Naive thymus-derived CD4-positive, alpha-beta T cell (primary cell): ENCODE measurements at regions of chr5 and their contacts with region 1.

Region 1: DNA sequence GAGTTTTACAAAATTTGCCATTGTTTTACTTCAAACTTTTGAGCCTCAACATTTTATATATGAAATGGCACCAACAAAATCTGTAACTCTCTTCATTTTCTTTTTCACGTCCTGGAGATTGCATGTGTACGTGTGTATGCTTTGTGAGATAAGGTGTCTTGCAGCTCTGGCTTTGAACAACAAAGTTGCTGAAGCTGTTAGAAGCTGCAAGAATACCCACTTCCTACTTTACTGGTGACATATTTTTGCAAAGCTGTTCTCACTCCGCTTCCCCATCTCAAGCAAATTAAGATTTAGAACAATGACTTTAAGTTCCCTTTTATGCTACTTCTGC is 41.8 kb downstream of the FYB1 start:
- DNase-seq: peak in 7 of 9 donors; percentile 61 to 86 (median 79)
- ATAC-seq: peak; percentile 79
- H3K4me3 ChIP-seq: peak overlapping the region; percentile 46
- H3K4me3 Mint-ChIP-seq: peak overlapping the region; percentile 58 to 86 (median 80)
- H3K27ac ChIP-seq: peak overlapping the region; percentile 72
- H3K27ac Mint-ChIP-seq: peak overlapping the region; percentile 87 to 98 (median 96)
- H3K4me1 ChIP-seq: peaks cover 94 to 95% of the 10 kb centered on the region in 2 donors
- H3K4me1 Mint-ChIP-seq: peaks cover 84 to 100% (median 96%) of the 10 kb centered on the region in 7 donors
- H3K27me3 ChIP-seq: no peaks in the 10 kb centered on the region
- H3K27me3 Mint-ChIP-seq: no peaks in the 10 kb centered on the region

Region 2: GRCh38 chr5:39074016-39074886 is 103.3 kb before region 1 on chr5 and contains the start of gene RICTOR:
- CTCF ChIA-PET with region 1: no interaction called
- POLR2A ChIA-PET with region 1: interaction called, 4 read pairs
- intact Hi-C with region 1: loop called in 1 of 2 experiments (anchors 5 kb)
- DNase-seq: peak; percentile 83 to 95 (median 88)
- ATAC-seq: peak; percentile 86
- H3K4me3 ChIP-seq: peak within 1 kb of the TSS; percentile 70
- H3K4me3 Mint-ChIP-seq: peak within 1 kb of the TSS; percentile 89 to 99 (median 98)
- H3K27ac ChIP-seq: peak within 1 kb of the TSS; percentile 100
- H3K27ac Mint-ChIP-seq: peak within 1 kb of the TSS; percentile 95 to 99 (median 98)
- H3K4me1 ChIP-seq: peaks cover 12 to 17% of the 10 kb centered on the region in 2 donors
- H3K4me1 Mint-ChIP-seq: peaks cover 23 to 63% (median 51%) of the 10 kb centered on the region in 7 donors
- H3K27me3 ChIP-seq: peaks cover 11 to 12% of the 10 kb centered on the region in 2 donors
- H3K27me3 Mint-ChIP-seq: peaks cover 4 to 29% (median 16%) of the 10 kb centered on the region in 5 donors
- total RNA-seq, gene RICTOR: 56.9 to 96.2 (median 86.5) TPM

Region 3: GRCh38 chr5:39158127-39158593 is 19.4 kb before region 1 on chr5:
- CTCF ChIA-PET with region 1: interaction called, 3 read pairs
- POLR2A ChIA-PET with region 1: interaction called, 22 read pairs
- intact Hi-C with region 1: loop called in 1 of 2 experiments (anchors 2 kb)
- DNase-seq: no peak
- ATAC-seq: no peak
- H3K4me3 ChIP-seq: no peak overlapping the region
- H3K4me3 Mint-ChIP-seq: peak overlapping the region in 9 of 10 donors; percentile 34 to 81 (median 61)
- H3K27ac ChIP-seq: peak overlapping the region; percentile 57
- H3K27ac Mint-ChIP-seq: peak overlapping the region in 8 of 9 donors; percentile 41 to 94 (median 78)
- H3K4me1 ChIP-seq: peaks cover 48 to 81% of the 10 kb centered on the region in 2 donors
- H3K4me1 Mint-ChIP-seq: peaks cover 52 to 97% (median 88%) of the 10 kb centered on the region in 7 donors
- H3K27me3 ChIP-seq: no peaks in the 10 kb centered on the region
- H3K27me3 Mint-ChIP-seq: no peaks in the 10 kb centered on the region

Region 4: GRCh38 chr5:39187831-39188731 is 10.5 kb after region 1 on chr5:
- CTCF ChIA-PET with region 1: interaction called, 24 read pairs
- POLR2A ChIA-PET with region 1: interaction called, 679 read pairs
- intact Hi-C with region 1: loop called (anchors 1 kb)
- DNase-seq: peak in 2 of 9 donors; percentile 46 to 50
- ATAC-seq: peak; percentile 45
- H3K4me3 ChIP-seq: peak overlapping the region; percentile 36
- H3K4me3 Mint-ChIP-seq: peak overlapping the region; percentile 78 to 98 (median 88)
- H3K27ac ChIP-seq: peak overlapping the region; percentile 73
- H3K27ac Mint-ChIP-seq: peak overlapping the region; percentile 92 to 99 (median 98)
- H3K4me1 ChIP-seq: peaks cover 75 to 85% of the 10 kb centered on the region in 2 donors
- H3K4me1 Mint-ChIP-seq: peaks cover 58 to 97% (median 91%) of the 10 kb centered on the region in 7 donors
- H3K27me3 ChIP-seq: no peaks in the 10 kb centered on the region
- H3K27me3 Mint-ChIP-seq: no peaks in the 10 kb centered on the region

Region 5: DNA sequence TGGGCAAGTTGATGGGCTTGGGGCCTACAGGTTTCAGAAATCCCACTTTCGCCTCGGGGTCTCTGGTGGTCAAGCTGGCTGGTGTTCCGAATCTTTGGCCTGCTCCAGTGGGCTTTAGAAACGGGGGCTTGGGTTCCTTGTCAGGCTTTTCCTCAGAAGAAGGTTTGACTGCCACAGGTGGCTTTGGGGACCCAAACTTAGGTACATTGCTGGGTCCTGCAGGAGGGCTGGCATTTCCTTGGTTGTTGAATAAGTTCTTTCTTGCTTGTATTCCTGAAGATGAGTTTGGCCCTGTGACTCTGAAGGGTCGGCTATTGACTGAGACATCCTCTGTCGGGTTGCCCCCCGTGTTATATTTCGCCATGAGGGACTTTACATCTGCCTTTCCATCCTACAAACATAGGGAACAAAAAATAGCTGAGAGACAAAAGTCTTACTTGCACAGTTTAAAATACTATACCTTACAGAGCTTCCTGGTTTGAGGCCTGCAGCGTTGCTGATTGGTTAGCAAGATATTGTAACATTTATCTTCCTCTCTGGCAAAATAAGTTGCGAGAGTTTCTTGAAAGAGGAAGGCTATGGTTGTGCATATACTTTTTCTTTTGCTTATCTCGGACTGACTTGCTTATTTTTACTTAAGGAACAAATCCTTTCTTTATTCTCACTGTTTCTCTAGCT is 25.1 kb after region 1 on chr5:
- CTCF ChIA-PET with region 1: interaction called, 51 read pairs
- POLR2A ChIA-PET with region 1: interaction called, 679 read pairs
- intact Hi-C with region 1: loop called (anchors 1 kb)
- DNase-seq: peak in 7 of 9 donors; percentile 57 to 72 (median 66)
- ATAC-seq: peak; percentile 82
- H3K4me3 ChIP-seq: peak overlapping the region; percentile 82
- H3K4me3 Mint-ChIP-seq: peak overlapping the region; percentile 75 to 100 (median 96)
- H3K27ac ChIP-seq: peak overlapping the region; percentile 93
- H3K27ac Mint-ChIP-seq: peak overlapping the region; percentile 86 to 99 (median 98)
- H3K4me1 ChIP-seq: peaks cover 43 to 48% of the 10 kb centered on the region in 2 donors
- H3K4me1 Mint-ChIP-seq: peaks cover 28 to 45% (median 44%) of the 10 kb centered on the region in 7 donors
- H3K27me3 ChIP-seq: no peaks in the 10 kb centered on the region
- H3K27me3 Mint-ChIP-seq: no peaks in the 10 kb centered on the region

Region 6: DNA sequence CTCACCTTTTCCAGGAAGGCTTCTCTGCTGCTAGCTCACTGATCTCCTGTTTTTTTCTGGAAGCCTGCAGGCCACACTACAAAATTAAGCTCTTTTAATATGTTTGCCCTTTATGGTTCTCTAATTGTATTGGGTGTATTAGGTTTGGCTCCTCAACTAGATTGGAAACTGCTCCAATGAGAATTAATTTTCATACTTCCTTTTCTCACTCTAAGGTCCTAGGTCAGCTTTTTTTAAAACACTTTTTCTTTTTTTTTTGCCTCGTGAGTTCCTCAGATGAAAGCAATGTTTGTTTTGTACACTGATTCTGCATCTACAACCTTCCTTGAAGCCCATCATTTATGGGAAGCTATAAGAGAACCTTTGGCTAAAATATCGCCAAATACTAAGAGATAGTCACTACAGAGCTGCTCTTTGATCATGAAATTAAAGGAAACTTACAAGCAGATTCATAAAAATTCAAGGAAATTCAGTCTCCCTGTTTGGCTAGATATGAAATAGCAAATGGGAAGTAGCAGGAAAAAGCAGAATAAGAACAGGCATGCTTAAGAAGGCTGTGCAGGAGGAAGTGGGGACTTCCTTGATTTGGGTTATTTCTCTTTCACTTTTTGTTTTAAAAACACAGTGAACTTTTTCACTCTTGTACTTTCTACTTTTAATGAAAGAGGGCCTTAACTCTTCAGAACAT is 96.9 kb after region 1 on chr5:
- CTCF ChIA-PET with region 1: interaction called, 6 read pairs
- POLR2A ChIA-PET with region 1: interaction called, 8 read pairs
- intact Hi-C with region 1: loop called in 1 of 2 experiments (anchors 2 kb)
- DNase-seq: peak in 7 of 9 donors; percentile 29 to 52 (median 46)
- ATAC-seq: peak; percentile 68
- H3K4me3 ChIP-seq: peak overlapping the region; percentile 59
- H3K4me3 Mint-ChIP-seq: peak overlapping the region; percentile 63 to 88 (median 85)
- H3K27ac ChIP-seq: peak overlapping the region; percentile 74
- H3K27ac Mint-ChIP-seq: peak overlapping the region; percentile 92 to 98 (median 96)
- H3K4me1 ChIP-seq: peaks cover 34 to 49% of the 10 kb centered on the region in 2 donors
- H3K4me1 Mint-ChIP-seq: peaks cover 25 to 67% (median 47%) of the 10 kb centered on the region in 7 donors
- H3K27me3 ChIP-seq: no peaks in the 10 kb centered on the region
- H3K27me3 Mint-ChIP-seq: no peaks in the 10 kb centered on the region

Region 7: GRCh38 chr5:40386289-40386688 is 1208.7 kb after region 1 on chr5:
- CTCF ChIA-PET with region 1: no interaction called
- POLR2A ChIA-PET with region 1: no interaction called
- intact Hi-C with region 1: loop called in 1 of 2 experiments (anchors 10 kb)
- DNase-seq: no peak
- ATAC-seq: peak; percentile 62
- H3K4me3 ChIP-seq: no peak overlapping the region
- H3K4me3 Mint-ChIP-seq: peak overlapping the region in 3 of 10 donors; percentile 38 to 55 (median 48)
- H3K27ac ChIP-seq: peak overlapping the region; percentile 26
- H3K27ac Mint-ChIP-seq: peak overlapping the region in 4 of 9 donors; percentile 26 to 79 (median 54)
- H3K4me1 ChIP-seq: peaks cover 23 to 66% of the 10 kb centered on the region in 2 donors
- H3K4me1 Mint-ChIP-seq: peaks cover 37 to 86% (median 66%) of the 10 kb centered on the region in 7 donors
- H3K27me3 ChIP-seq: no peaks in the 10 kb centered on the region
- H3K27me3 Mint-ChIP-seq: no peaks in the 10 kb centered on the region